ENCODE measurements at regions of chr20 and their contacts with region 1.

Region 1: GRCh38 chr20:56306912-56307311 is 51.9 kb upstream of the FAM210B start:
- DNase-seq: no peak
- H3K4me3 ChIP-seq: no peak overlapping the region
- H3K27ac ChIP-seq: no peak overlapping the region
- H3K4me1 ChIP-seq: no peaks in the 10 kb centered on the region
- H3K27me3 ChIP-seq: no peaks in the 10 kb centered on the region
- CTCF ChIP-seq: no peak
- EP300 ChIP-seq: no peak
- POLR2A ChIP-seq: no peak

Region 2: GRCh38 chr20:56271974-56272373 is 34.9 kb before region 1 on chr20:
- intact Hi-C with region 1: loop called in 1 of 4 experiments (anchors 1 kb)
- DNase-seq: no peak
- H3K4me3 ChIP-seq: no peak overlapping the region
- H3K27ac ChIP-seq: no peak overlapping the region
- H3K4me1 ChIP-seq: no peaks in the 10 kb centered on the region
- H3K27me3 ChIP-seq: no peaks in the 10 kb centered on the region
- CTCF ChIP-seq: no peak
- EP300 ChIP-seq: no peak
- POLR2A ChIP-seq: no peak

Measured in ovary (tissue), 10 donors.